ENCODE measurements at regions of chr2 and their contacts with region 1.

Region 1: DNA sequence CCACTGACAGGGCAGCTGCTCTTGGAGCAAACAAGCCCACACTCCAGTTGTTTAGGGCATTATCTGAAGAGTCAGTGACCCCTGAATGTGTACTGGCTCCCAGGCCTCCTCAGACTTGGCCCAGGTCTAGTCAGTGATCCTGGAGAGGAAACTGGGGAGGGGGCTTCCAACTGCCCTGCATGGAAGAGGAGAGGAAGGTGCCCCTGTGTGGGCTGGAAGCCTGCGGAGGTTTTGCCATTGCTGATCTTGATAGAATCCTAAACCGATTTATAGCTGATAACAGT is 197.4 kb downstream of the MGAT5 start:
- DNase-seq: no peak
- H3K4me3 Mint-ChIP-seq: no peak overlapping the region
- H3K27ac Mint-ChIP-seq: no peak overlapping the region
- H3K4me1 Mint-ChIP-seq: no peaks in the 10 kb centered on the region
- H3K27me3 Mint-ChIP-seq: no peaks in the 10 kb centered on the region

Region 2: DNA sequence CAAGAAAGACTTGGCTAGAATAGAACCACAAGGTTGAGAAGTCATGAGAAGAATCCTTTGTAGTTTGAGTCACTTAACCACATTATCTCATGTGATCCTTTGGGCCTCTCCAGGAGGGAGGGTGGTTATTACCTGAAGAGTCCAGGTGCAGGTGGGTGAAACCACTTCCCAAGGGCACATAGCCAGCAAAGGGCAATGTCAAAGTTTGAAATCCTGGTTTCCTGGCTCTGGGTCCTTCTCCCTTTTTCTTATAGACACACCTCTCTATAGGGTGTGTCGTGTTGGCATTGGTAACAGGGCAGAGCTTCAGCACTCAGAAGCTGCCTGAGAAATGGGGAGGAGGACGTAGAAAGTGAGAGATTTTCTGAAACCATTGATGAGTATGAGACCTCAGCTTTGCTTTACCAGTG is 59.5 kb before region 1 on chr2:
- intact Hi-C with region 1: no loop called
- DNase-seq: no peak
- H3K4me3 Mint-ChIP-seq: no peak overlapping the region
- H3K27ac Mint-ChIP-seq: no peak overlapping the region
- H3K4me1 Mint-ChIP-seq: peaks cover 9% of the 10 kb centered on the region
- H3K27me3 Mint-ChIP-seq: no peaks in the 10 kb centered on the region

Region 3: GRCh38 chr2:134594399-134594798 is 143.1 kb after region 1 on chr2:
- intact Hi-C with region 1: no loop called
- DNase-seq: no peak
- H3K4me3 Mint-ChIP-seq: no peak overlapping the region
- H3K27ac Mint-ChIP-seq: no peak overlapping the region
- H3K4me1 Mint-ChIP-seq: no peaks in the 10 kb centered on the region
- H3K27me3 Mint-ChIP-seq: no peaks in the 10 kb centered on the region

Region 4: DNA sequence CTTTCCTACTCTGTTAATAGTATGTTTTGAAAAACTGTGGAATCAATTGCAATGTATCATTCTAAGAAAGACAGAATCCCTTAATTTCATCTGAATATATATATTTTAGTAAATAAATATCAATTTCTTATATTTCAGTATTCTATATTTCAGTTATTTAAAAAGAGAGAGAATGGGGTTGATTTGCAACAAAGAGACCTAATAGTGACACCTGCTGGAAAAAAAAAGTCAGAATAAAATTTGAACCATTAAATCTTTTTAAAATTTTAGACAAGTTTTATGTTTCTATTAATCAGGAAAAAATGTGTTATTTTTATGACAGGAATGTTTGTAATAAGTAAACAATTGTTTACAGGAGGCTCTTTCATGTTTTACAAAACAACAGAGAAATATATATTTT is 446.6 kb after region 1 on chr2:
- intact Hi-C with region 1: loop called (anchors 1 kb)
- DNase-seq: no peak
- H3K4me3 Mint-ChIP-seq: no peak overlapping the region
- H3K27ac Mint-ChIP-seq: no peak overlapping the region
- H3K4me1 Mint-ChIP-seq: no peaks in the 10 kb centered on the region
- H3K27me3 Mint-ChIP-seq: peaks cover 27% of the 10 kb centered on the region